Posterior vena cava (tissue), 2 donors: ENCODE measurements at regions of chr9 and their contacts with region 1.

Region 1: GRCh38 chr9:99819856-99820684 is 1.6 kb upstream of the NR4A3 start:
- DNase-seq: peak; percentile 99

Region 2: DNA sequence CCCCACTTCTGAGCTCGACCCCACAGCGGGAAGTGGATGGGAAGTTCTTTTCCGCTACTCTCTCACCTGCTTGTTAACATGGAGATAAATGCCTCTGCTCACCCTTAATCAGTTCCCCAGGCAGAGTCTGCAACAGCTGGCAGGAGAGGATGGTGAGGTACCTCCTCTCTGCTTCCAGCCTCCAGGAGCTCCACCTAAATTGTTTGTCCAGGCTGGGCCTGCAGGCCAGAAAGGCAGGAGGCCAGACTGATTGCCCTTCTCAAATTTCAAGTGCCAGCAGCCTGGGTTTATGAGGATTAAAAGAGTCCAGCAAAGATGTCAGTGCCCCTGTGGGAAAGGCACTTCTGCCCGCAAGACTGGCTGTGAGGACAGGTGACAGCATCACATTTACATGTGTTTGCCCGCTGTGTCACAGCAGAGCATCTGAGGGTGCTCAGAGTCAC is 1647.5 kb before region 1 on chr9:
- intact Hi-C with region 1: loop called in 1 of 2 experiments (anchors 10 kb)
- DNase-seq: peak; percentile 23

Region 3: GRCh38 chr9:99221621-99222415 is 598.3 kb before region 1 on chr9 and contains the starts of genes ALG2 and SEC61B:
- intact Hi-C with region 1: loop called in 1 of 2 experiments (anchors 5 kb)
- DNase-seq: peak; percentile 98
- total RNA-seq, gene ALG2: 22.5 to 25.4 TPM
- total RNA-seq, gene SEC61B: 108 to 117 TPM

Region 4: GRCh38 chr9:99266255-99267023 is 553.6 kb before region 1 on chr9:
- intact Hi-C with region 1: loop called in 1 of 2 experiments (anchors 5 kb)
- DNase-seq: peak; percentile 90

Region 5: DNA sequence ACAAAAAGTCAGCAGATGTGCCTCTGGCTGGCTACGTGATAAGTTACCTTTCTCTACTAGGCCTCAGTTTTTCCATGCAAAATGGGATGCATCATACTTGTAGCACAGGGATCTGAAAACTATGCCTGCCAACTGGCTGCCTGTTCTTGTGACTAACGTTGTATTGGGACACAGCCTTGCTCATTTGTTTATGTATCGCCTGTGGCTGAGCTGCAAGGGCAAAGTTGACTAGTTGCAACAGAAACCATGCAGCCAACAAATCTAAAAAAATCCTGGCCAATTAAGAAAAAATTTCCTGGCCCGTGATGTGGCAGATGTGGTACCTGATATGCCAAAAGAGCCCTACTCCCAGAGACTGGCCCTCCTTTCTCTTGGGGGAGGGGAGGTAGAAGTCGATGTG is 466.7 kb before region 1 on chr9:
- intact Hi-C with region 1: loop called in 1 of 2 experiments (anchors 10 kb)
- DNase-seq: no peak

Region 6: GRCh38 chr9:99752417-99753109 is 67.5 kb before region 1 on chr9:
- intact Hi-C with region 1: no loop called
- DNase-seq: no peak